SK-N-SH (cell line): ENCODE measurements at regions of chr7 and their contacts with region 1.

Region 1: GRCh38 chr7:18345641-18346234 is 149.8 kb upstream of the HDAC9 start:
- DNase-seq: peak; percentile 21
- H3K4me3 ChIP-seq: no peak overlapping the region; a peak in 1 of 4 replicates
- H3K27ac ChIP-seq: no peak overlapping the region
- H3K4me1 ChIP-seq: no peaks in the 10 kb centered on the region; a peak in 1 of 4 replicates
- H3K27me3 ChIP-seq: no peaks in the 10 kb centered on the region; the same call in 1 of the 2 replicates
- CTCF ChIP-seq: peak; percentile 99
- EP300 ChIP-seq: no peak
- RAD21 ChIP-seq: peak; percentile 95

Region 2: GRCh38 chr7:17680943-17681351 is 664.8 kb before region 1 on chr7:
- CTCF ChIA-PET with region 1: interaction called, 18 read pairs
- POLR2A ChIA-PET with region 1: no interaction called
- DNase-seq: no peak
- H3K4me3 ChIP-seq: no peak overlapping the region
- H3K27ac ChIP-seq: peak overlapping the region in 1 of 2 experiments; percentile 65; a peak in 2 of 4 replicates
- H3K4me1 ChIP-seq: peaks cover 0 to 22% of the 10 kb centered on the region in 2 experiments; a peak in 3 of 4 replicates
- H3K27me3 ChIP-seq: no peaks in the 10 kb centered on the region
- CTCF ChIP-seq: peak; percentile 58
- EP300 ChIP-seq: no peak
- RAD21 ChIP-seq: peak; percentile 51

Region 3: DNA sequence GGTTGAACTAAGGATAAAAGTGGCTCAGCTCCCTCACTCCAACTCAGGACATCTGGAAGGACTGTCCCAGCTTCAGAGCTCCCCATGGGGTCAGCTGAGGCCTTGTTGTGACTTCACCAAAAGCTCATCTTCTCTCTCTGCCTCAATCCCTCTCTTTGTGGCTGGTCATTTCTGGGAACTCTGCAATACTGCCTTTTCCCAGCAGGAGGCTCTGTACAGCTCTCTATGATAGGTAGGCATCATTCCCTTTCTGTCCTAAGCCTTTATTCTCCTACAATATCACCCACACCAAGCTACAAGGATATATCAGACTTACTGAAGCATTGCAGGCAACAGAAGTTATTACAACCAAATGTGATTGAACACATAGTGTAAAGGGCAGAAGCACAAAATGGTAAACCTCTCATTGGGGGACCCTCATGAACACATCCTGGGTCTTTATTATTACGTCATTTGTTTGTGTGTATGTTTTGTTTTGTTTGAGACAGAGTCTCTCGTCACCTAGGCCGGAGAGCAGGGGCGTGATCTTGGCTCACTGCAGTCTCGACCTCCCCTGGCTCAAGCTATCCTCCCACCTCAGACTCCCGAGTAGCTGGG is 281.4 kb before region 1 on chr7:
- CTCF ChIA-PET with region 1: interaction called, 13 read pairs
- POLR2A ChIA-PET with region 1: no interaction called
- DNase-seq: peak; percentile 26
- H3K4me3 ChIP-seq: no peak overlapping the region
- H3K27ac ChIP-seq: no peak overlapping the region
- H3K4me1 ChIP-seq: no peaks in the 10 kb centered on the region
- H3K27me3 ChIP-seq: peaks cover 22% of the 10 kb centered on the region; the same call in 1 of the 2 replicates
- CTCF ChIP-seq: peak; percentile 52
- EP300 ChIP-seq: no peak
- RAD21 ChIP-seq: peak; percentile 75